ENCODE measurements at regions of chr3 and their contacts with region 1.

Region 1: GRCh38 chr3:112333002-112333380 is at the start of gene CD200:
- DNase-seq: no peak
- ATAC-seq: peak; percentile 70
- H3K4me3 ChIP-seq: peak within 1 kb of the TSS; percentile 96
- H3K27ac ChIP-seq: peak within 1 kb of the TSS; percentile 74
- H3K4me1 ChIP-seq: no peaks in the 10 kb centered on the region
- H3K27me3 ChIP-seq: no peaks in the 10 kb centered on the region
- CTCF ChIP-seq: no peak
- EP300 ChIP-seq: no peak
- POLR2A ChIP-seq: peak; percentile 83
- RAD21 ChIP-seq: no peak
- polyA plus RNA-seq, gene CD200: 39.8 to 44.0 TPM

Region 2: GRCh38 chr3:112117841-112118571 is 215.0 kb before region 1 on chr3:
- CTCF ChIA-PET with region 1: interaction called, 4 read pairs
- POLR2A ChIA-PET with region 1: interaction called, 9 read pairs
- RAD21 ChIA-PET with region 1: interaction called, 16 read pairs
- SMC1A ChIA-PET with region 1: interaction called, 9 read pairs
- in situ Hi-C with region 1: no loop called
- intact Hi-C with region 1: no loop called
- DNase-seq: no peak
- ATAC-seq: peak; percentile 48
- H3K4me3 ChIP-seq: peak overlapping the region; percentile 48; the same call in 1 of the 2 replicates
- H3K27ac ChIP-seq: peak overlapping the region; percentile 95
- H3K4me1 ChIP-seq: peaks cover 92% of the 10 kb centered on the region
- H3K27me3 ChIP-seq: no peaks in the 10 kb centered on the region
- CTCF ChIP-seq: peak; percentile 32 to 34 (median 33); a peak in 5 of 6 replicates
- EP300 ChIP-seq: no peak
- POLR2A ChIP-seq: peak; percentile 47; the same call in 1 of the 2 replicates
- RAD21 ChIP-seq: peak; percentile 43

Region 3: GRCh38 chr3:112350181-112350825 is 17.3 kb after region 1 on chr3:
- CTCF ChIA-PET with region 1: interaction called, 13 read pairs
- POLR2A ChIA-PET with region 1: interaction called, 29 read pairs
- RAD21 ChIA-PET with region 1: interaction called, 19 read pairs
- SMC1A ChIA-PET with region 1: interaction called, 28 read pairs
- in situ Hi-C with region 1: no loop called
- intact Hi-C with region 1: no loop called
- DNase-seq: no peak
- ATAC-seq: no peak
- H3K4me3 ChIP-seq: no peak overlapping the region
- H3K27ac ChIP-seq: no peak overlapping the region
- H3K4me1 ChIP-seq: peaks cover 9% of the 10 kb centered on the region
- H3K27me3 ChIP-seq: no peaks in the 10 kb centered on the region
- CTCF ChIP-seq: no peak
- EP300 ChIP-seq: no peak
- POLR2A ChIP-seq: no peak
- RAD21 ChIP-seq: no peak

Region 4: GRCh38 chr3:112437146-112438022 is 104.4 kb after region 1 on chr3:
- CTCF ChIA-PET with region 1: interaction called, 9 read pairs
- POLR2A ChIA-PET with region 1: no interaction called
- RAD21 ChIA-PET with region 1: interaction called, 7 read pairs
- SMC1A ChIA-PET with region 1: interaction called, 12 read pairs
- in situ Hi-C with region 1: no loop called
- intact Hi-C with region 1: no loop called
- DNase-seq: no peak
- ATAC-seq: peak; percentile 79
- H3K4me3 ChIP-seq: no peak overlapping the region
- H3K27ac ChIP-seq: no peak overlapping the region
- H3K4me1 ChIP-seq: peaks cover 5% of the 10 kb centered on the region
- H3K27me3 ChIP-seq: no peaks in the 10 kb centered on the region
- CTCF ChIP-seq: peak; percentile 22 to 62 (median 28); a peak in 4 of 6 replicates
- EP300 ChIP-seq: no peak
- POLR2A ChIP-seq: no peak
- RAD21 ChIP-seq: peak; percentile 84

Region 5: DNA sequence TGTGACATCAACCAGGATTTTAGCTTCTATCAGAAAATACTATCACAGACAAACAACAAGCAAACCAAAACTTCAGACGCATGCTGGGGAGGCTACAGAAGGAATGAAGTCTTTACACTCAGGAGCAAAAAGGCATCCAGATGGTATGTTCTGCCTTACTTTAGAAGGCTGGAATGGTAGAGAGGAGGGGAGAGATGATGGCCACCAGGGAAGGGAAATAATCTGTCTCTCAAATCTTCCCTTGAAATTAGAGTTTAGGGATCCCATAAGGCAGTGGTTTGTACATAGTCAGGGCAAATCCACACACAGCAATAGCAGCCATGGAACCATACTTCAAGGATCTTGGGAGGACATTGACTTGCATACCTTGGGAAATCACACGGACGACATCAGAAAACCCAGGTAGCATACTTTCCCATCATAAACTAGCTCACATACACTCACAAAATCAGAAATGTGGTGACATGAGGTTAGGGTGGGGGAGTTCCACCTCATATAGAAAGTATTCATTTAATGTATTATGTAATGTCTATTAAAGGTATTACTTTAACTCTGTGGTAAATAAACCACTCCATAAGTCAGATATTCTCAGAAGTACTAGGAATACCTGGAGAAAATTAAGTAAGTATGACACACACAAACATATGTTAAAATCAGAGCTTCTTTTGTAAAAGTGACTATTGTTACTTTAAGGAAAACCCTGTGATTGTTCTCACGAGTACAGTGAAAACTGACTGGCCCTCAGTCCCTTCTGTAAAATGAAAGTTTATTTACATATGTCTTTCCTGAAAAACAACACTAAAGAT is 156.9 kb after region 1 on chr3:
- CTCF ChIA-PET with region 1: interaction called, 7 read pairs
- POLR2A ChIA-PET with region 1: interaction called, 9 read pairs
- RAD21 ChIA-PET with region 1: interaction called, 77 read pairs
- SMC1A ChIA-PET with region 1: interaction called, 68 read pairs
- in situ Hi-C with region 1: no loop called
- intact Hi-C with region 1: no loop called
- DNase-seq: peak; percentile 75
- ATAC-seq: peak; percentile 61
- H3K4me3 ChIP-seq: peak overlapping the region; percentile 51
- H3K27ac ChIP-seq: peak overlapping the region; percentile 97
- H3K4me1 ChIP-seq: peaks cover 13% of the 10 kb centered on the region; the same call in 1 of the 2 replicates
- H3K27me3 ChIP-seq: no peaks in the 10 kb centered on the region
- CTCF ChIP-seq: no peak
- EP300 ChIP-seq: peak in 1 of 2 experiments; percentile 27; a peak in 1 of 4 replicates
- POLR2A ChIP-seq: no peak
- RAD21 ChIP-seq: 0 out of 2 replicates have a peak, but pooled peaks have one; percentile 22

Region 6: DNA sequence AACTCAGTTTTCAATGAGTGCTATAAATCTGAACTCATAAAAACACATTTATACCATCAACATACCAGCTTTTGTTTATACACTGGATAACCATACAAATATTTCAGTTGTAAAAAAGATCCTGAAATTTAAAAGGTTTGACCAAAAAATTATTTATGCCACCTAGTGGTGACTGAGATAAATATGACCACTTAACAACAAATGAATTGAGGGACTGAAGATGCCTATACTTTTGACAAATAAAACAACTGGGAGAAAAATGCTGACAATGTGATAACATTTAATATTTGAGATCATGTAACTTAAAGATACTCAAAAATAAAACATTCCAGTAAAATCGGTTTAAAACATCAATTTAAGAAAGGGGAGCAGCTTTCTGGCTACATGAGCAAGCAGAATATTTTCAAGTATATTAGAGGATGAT is 198.4 kb after region 1 on chr3:
- CTCF ChIA-PET with region 1: interaction called, 10 read pairs
- POLR2A ChIA-PET with region 1: no interaction called
- RAD21 ChIA-PET with region 1: interaction called, 7 read pairs
- SMC1A ChIA-PET with region 1: interaction called, 13 read pairs
- in situ Hi-C with region 1: no loop called
- intact Hi-C with region 1: no loop called
- DNase-seq: no peak
- ATAC-seq: peak; percentile 39; the same call in 2 of the 3 replicates
- H3K4me3 ChIP-seq: no peak overlapping the region
- H3K27ac ChIP-seq: no peak overlapping the region
- H3K4me1 ChIP-seq: no peaks in the 10 kb centered on the region
- H3K27me3 ChIP-seq: no peaks in the 10 kb centered on the region
- CTCF ChIP-seq: peak; percentile 21 to 43 (median 41); a peak in 3 of 6 replicates
- EP300 ChIP-seq: no peak
- POLR2A ChIP-seq: no peak
- RAD21 ChIP-seq: peak; percentile 36; the same call in 1 of the 2 replicates

Region 7: DNA sequence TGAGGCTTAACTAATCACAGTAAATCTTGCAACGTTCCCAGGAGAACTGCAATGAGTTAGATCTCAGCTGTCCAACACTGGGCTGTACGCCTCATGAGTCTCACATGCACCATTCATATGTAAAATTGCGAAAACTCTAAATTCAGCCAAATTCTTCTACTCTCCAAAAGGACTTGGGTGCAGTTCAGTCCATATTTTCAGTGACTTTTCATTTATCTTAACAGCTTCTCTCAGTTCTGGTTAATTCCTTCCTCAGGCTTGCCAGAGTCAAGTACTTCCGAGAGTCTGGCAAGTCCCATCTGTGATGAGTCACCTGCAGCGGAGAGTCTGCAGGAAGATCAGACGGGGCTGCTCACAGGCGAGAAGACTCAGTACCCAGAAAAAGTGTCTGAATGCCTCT is 296.4 kb after region 1 on chr3:
- CTCF ChIA-PET with region 1: no interaction called
- POLR2A ChIA-PET with region 1: no interaction called
- RAD21 ChIA-PET with region 1: no interaction called
- SMC1A ChIA-PET with region 1: no interaction called
- in situ Hi-C with region 1: no loop called
- intact Hi-C with region 1: no loop called
- DNase-seq: no peak
- ATAC-seq: peak; percentile 63
- H3K4me3 ChIP-seq: no peak overlapping the region
- H3K27ac ChIP-seq: no peak overlapping the region
- H3K4me1 ChIP-seq: no peaks in the 10 kb centered on the region
- H3K27me3 ChIP-seq: 0 out of 4 replicates have a peak, but pooled peaks cover 0 to 4% of the 10 kb centered on the region in 2 experiments
- CTCF ChIP-seq: no peak
- EP300 ChIP-seq: no peak
- POLR2A ChIP-seq: no peak
- RAD21 ChIP-seq: no peak